ENCODE measurements at regions of chr15 and their contacts with region 1.

Region 1: GRCh38 chr15:101014921-101015841 is 96.0 kb downstream of the LRRK1 start:
- DNase-seq: peak; percentile 77 to 78 (median 77)
- ATAC-seq: peak; percentile 80 to 91 (median 88)
- H3K4me3 ChIP-seq: no peak overlapping the region
- H3K27ac ChIP-seq: no peak overlapping the region
- H3K4me1 ChIP-seq: no peaks in the 10 kb centered on the region
- H3K27me3 ChIP-seq: no peaks in the 10 kb centered on the region
- CTCF ChIP-seq: peak; percentile 80 to 89 (median 86)
- POLR2A ChIP-seq: no peak

Region 2: GRCh38 chr15:101258238-101259144 is 243.3 kb after region 1 on chr15:
- intact Hi-C with region 1: loop called (anchors 5 kb)
- DNase-seq: no peak
- ATAC-seq: peak; percentile 80 to 89 (median 84)
- H3K4me3 ChIP-seq: no peak overlapping the region
- H3K27ac ChIP-seq: no peak overlapping the region
- H3K4me1 ChIP-seq: no peaks in the 10 kb centered on the region
- H3K27me3 ChIP-seq: no peaks in the 10 kb centered on the region
- CTCF ChIP-seq: peak; percentile 85 to 94 (median 88)
- POLR2A ChIP-seq: no peak